Activated T-helper 1 cell treated with anti-CD3 and anti-CD28 coated beads, Interleukin-12 subunit alpha, Interleukin-12 subunit beta, Interleukin-2, Interleukin-4 antibody, amounts not matched to agents 30 ng/mL and 10 ng/mL and 1 ng/mL, durations not matched to agents 14 hours and 24 hours and 36 hours (primary cell): ENCODE measurements at regions of chr10 and their contacts with region 1.

Region 1: GRCh38 chr10:27155066-27155754 is at the start of gene MASTL:
- DNase-seq: peak; percentile 93
- H3K4me3 Mint-ChIP-seq: peak within 1 kb of the TSS; percentile 99
- H3K27ac Mint-ChIP-seq: peak within 1 kb of the TSS; percentile 99
- H3K4me1 Mint-ChIP-seq: peaks cover 42% of the 10 kb centered on the region
- H3K27me3 Mint-ChIP-seq: no peaks in the 10 kb centered on the region
- total RNA-seq, gene MASTL: 33.2 and 33.7 TPM in 2 replicates

Region 2: DNA sequence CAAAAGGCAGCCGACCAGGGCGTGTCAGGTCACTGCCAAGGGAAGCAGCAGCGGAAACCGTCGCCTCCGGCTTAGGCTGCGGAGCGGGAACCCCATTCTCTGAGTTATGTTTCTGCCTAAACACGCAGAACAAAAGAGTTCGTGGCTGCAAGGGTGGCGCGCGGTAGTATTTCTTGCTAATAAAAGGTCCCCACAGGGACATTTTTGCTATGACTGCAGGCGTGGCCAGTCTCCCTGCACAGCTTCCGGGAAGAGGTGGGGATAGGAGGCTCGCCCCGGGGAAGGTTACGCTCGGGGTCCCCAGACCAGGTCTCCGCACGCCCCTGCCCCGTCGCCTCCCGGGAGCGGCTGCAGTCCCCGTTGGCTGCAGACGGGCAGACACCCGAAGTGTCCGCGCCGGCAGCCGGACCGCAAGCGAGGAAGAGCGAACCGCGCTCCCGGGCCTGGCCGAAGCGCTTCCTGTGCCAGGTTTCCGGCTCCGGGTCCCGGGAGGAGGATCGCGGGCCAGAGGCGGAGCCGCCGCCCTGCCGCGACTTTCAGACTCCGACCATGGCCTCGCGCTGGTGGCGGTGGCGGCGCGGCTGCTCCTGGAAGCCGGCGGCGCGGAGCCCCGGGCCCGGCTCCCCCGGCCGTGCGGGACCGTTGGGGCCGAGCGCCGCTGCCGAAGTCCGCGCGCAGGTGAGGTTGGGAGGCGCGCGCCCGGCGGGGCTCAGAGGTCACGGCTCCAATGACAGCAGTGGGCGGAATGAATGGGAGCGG is 457.9 kb before region 1 on chr10 and contains the start of gene PDSS1:
- intact Hi-C with region 1: loop called (anchors 2 kb)
- DNase-seq: peak; percentile 64
- H3K4me3 Mint-ChIP-seq: peak within 1 kb of the TSS; percentile 100
- H3K27ac Mint-ChIP-seq: peak within 1 kb of the TSS; percentile 94
- H3K4me1 Mint-ChIP-seq: peaks cover 31% of the 10 kb centered on the region
- H3K27me3 Mint-ChIP-seq: no peaks in the 10 kb centered on the region
- total RNA-seq, gene PDSS1: 39.3 and 43.1 TPM in 2 replicates

Region 3: GRCh38 chr10:26890956-26891355 is 264.3 kb before region 1 on chr10:
- intact Hi-C with region 1: loop called (anchors 2 kb)
- DNase-seq: peak; percentile 22
- H3K4me3 Mint-ChIP-seq: no peak overlapping the region
- H3K27ac Mint-ChIP-seq: no peak overlapping the region
- H3K4me1 Mint-ChIP-seq: no peaks in the 10 kb centered on the region
- H3K27me3 Mint-ChIP-seq: peaks cover 8% of the 10 kb centered on the region

Region 4: GRCh38 chr10:27138277-27138676 is 16.9 kb before region 1 on chr10:
- intact Hi-C with region 1: loop called (anchors 2 kb)
- DNase-seq: no peak
- H3K4me3 Mint-ChIP-seq: no peak overlapping the region
- H3K27ac Mint-ChIP-seq: no peak overlapping the region
- H3K4me1 Mint-ChIP-seq: no peaks in the 10 kb centered on the region
- H3K27me3 Mint-ChIP-seq: no peaks in the 10 kb centered on the region

Region 5: DNA sequence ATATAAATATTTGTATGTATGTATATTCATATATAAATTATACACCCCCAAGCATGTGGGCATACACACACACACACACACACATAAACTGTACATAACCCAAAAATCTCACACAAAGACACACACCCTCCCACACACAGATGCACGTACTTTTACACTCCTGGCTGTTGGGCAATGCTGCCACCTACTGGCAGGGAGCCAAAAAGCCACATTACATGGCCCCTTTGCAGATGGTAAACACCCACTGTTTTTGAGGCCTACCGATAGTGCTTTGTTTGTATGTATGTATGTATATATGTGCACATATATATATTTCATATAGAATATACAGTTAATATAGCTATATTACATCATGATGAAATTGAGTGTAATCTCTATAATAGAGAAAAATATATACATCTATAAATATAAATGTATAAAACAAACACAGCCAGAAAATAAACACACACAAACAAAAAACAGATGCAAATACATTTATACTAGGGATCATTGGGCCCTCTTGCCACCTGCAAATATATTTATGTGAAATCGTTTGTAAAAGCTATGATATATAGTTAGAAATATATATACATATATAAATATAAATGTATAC is 205.5 kb after region 1 on chr10:
- intact Hi-C with region 1: loop called (anchors 1 kb)
- DNase-seq: peak; percentile 74
- H3K4me3 Mint-ChIP-seq: no peak overlapping the region
- H3K27ac Mint-ChIP-seq: no peak overlapping the region
- H3K4me1 Mint-ChIP-seq: peaks cover 3% of the 10 kb centered on the region
- H3K27me3 Mint-ChIP-seq: no peaks in the 10 kb centered on the region

Region 6: GRCh38 chr10:28334296-28334695 is 1179.1 kb after region 1 on chr10:
- intact Hi-C with region 1: loop called (anchors 2 kb)
- DNase-seq: peak; percentile 66
- H3K4me3 Mint-ChIP-seq: peak overlapping the region; percentile 81
- H3K27ac Mint-ChIP-seq: peak overlapping the region; percentile 99
- H3K4me1 Mint-ChIP-seq: peaks cover 67% of the 10 kb centered on the region
- H3K27me3 Mint-ChIP-seq: peaks cover 21% of the 10 kb centered on the region